Naive thymus-derived CD4-positive, alpha-beta T cell (primary cell): ENCODE measurements at regions of chr9 and their contacts with region 1.

Region 1: GRCh38 chr9:6443661-6444060 is 30.7 kb downstream of the UHRF2 start:
- DNase-seq: no peak
- ATAC-seq: no peak
- H3K4me3 ChIP-seq: no peak overlapping the region
- H3K4me3 Mint-ChIP-seq: peak overlapping the region in 2 of 10 donors; percentile 12 to 25
- H3K27ac ChIP-seq: no peak overlapping the region
- H3K27ac Mint-ChIP-seq: peak overlapping the region in 3 of 9 donors; percentile 6 to 44 (median 34)
- H3K4me1 ChIP-seq: peaks cover 11 to 29% of the 10 kb centered on the region in 2 donors
- H3K4me1 Mint-ChIP-seq: peaks cover 37 to 86% (median 82%) of the 10 kb centered on the region in 7 donors
- H3K27me3 ChIP-seq: no peaks in the 10 kb centered on the region
- H3K27me3 Mint-ChIP-seq: no peaks in the 10 kb centered on the region

Region 2: DNA sequence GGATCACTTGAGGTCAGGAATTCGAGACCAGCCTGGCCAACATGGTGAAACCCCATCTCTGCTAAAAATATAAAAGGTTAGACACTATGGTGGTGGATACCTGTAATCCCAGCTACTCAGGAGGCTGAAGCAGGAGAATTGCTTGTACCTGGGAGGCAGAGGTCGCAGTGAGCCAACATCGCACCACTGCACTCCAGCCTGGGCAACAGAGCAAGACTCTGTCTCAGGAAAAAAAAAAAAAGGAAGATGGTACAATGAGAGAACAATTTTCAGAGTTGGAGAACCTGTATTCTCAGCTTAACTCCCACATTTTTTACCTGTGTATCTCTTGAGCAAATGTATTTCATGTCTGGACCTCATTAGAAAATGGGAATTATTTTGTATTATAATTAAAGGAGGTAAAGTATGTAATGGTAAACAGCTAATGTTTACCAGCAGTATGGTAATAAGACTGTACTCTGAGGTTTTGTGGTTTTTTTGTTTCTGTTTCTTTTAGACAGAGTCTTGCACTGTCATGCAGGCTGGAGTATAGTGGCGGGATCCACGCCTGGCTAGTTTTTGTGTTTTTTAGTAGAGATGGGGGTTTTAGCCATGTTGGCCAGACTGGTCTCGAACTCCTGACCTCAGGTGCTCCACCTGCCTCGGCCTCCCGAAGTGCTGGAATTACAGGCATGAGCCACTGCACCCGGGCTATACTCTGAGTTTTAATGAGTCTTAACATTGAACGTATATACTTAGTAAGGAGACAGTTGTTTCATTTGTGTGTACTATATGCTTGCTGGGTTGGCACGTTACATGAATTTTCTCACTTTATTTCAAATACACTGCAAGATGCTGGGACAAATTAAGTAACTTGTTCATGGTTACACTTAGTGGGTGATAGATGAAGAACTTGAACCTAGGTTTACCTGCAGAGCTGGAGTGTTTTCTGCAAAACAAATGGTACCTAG is 14.4 kb before region 1 on chr9:
- CTCF ChIA-PET with region 1: no interaction called
- POLR2A ChIA-PET with region 1: no interaction called
- intact Hi-C with region 1: loop called in 1 of 2 experiments (anchors 1 kb)
- DNase-seq: peak in 1 of 9 donors; percentile 12
- ATAC-seq: peak; percentile 78
- H3K4me3 ChIP-seq: no peak overlapping the region
- H3K4me3 Mint-ChIP-seq: peak overlapping the region in 9 of 10 donors; percentile 1 to 80 (median 50)
- H3K27ac ChIP-seq: no peak overlapping the region
- H3K27ac Mint-ChIP-seq: peak overlapping the region in 8 of 9 donors; percentile 20 to 85 (median 57)
- H3K4me1 ChIP-seq: peaks cover 15 to 45% of the 10 kb centered on the region in 2 donors
- H3K4me1 Mint-ChIP-seq: peaks cover 52 to 90% (median 75%) of the 10 kb centered on the region in 7 donors
- H3K27me3 ChIP-seq: no peaks in the 10 kb centered on the region
- H3K27me3 Mint-ChIP-seq: no peaks in the 10 kb centered on the region